ENCODE measurements at regions of chr17 and their contacts with region 1.

Region 1: GRCh38 chr17:7239091-7240027 is at the start of gene PHF23:
- DNase-seq: peak; percentile 91 to 98 (median 97)
- ATAC-seq: peak; percentile 78
- H3K4me3 ChIP-seq: peak within 1 kb of the TSS; percentile 76
- H3K4me3 Mint-ChIP-seq: peak within 1 kb of the TSS; percentile 88 to 98 (median 95)
- H3K27ac ChIP-seq: peak within 1 kb of the TSS; percentile 92
- H3K27ac Mint-ChIP-seq: peak within 1 kb of the TSS; percentile 55 to 100 (median 95)
- H3K4me1 ChIP-seq: peaks cover 32 to 44% of the 10 kb centered on the region in 2 donors
- H3K4me1 Mint-ChIP-seq: peaks cover 38 to 67% (median 60%) of the 10 kb centered on the region in 7 donors
- H3K27me3 ChIP-seq: no peaks in the 10 kb centered on the region
- H3K27me3 Mint-ChIP-seq: peaks cover 0 to 7% (median 0%) of the 10 kb centered on the region in 5 donors
- total RNA-seq, gene PHF23: 12.3 to 58.7 (median 55.2) TPM

Region 2: DNA sequence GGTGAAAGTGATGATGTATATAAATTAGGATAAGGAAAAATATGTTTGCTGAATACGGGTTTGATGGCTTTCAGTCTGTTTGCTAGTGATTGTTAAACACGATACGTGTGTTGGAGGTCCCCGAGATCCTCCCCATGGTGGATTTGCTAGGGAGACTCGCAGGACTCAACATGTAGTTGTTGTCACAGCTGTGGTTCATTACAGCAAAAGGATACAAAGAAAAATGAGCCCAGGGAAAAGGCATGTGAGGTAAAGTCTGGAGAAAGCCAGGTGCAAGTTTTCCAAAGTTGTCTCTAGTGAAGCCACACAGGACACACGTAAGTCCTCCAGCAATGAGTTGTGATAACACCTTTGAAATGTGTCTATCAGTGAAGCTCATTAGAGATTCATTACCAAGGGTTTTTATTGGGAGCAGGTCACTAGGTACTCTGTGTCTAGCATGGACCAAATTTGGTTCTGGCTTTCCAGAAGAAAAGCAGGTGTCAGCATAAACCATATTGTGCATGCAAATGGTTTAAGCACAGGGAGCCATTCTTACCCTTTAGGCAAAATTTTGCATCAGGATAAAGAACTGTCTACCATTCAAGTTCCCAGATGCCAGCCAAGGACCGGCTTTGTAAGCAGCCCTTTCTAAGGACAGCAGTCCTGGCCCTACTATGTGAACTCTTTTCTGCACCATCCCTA is 1384.3 kb before region 1 on chr17:
- CTCF ChIA-PET with region 1: no interaction called
- POLR2A ChIA-PET with region 1: no interaction called
- intact Hi-C with region 1: no loop called
- DNase-seq: no peak
- ATAC-seq: no peak
- H3K4me3 ChIP-seq: no peak overlapping the region
- H3K4me3 Mint-ChIP-seq: no peak overlapping the region
- H3K27ac ChIP-seq: no peak overlapping the region
- H3K27ac Mint-ChIP-seq: no peak overlapping the region
- H3K4me1 ChIP-seq: no peaks in the 10 kb centered on the region
- H3K4me1 Mint-ChIP-seq: no peaks in the 10 kb centered on the region
- H3K27me3 ChIP-seq: no peaks in the 10 kb centered on the region
- H3K27me3 Mint-ChIP-seq: peaks cover 0 to 14% (median 7%) of the 10 kb centered on the region in 5 donors

Region 3: DNA sequence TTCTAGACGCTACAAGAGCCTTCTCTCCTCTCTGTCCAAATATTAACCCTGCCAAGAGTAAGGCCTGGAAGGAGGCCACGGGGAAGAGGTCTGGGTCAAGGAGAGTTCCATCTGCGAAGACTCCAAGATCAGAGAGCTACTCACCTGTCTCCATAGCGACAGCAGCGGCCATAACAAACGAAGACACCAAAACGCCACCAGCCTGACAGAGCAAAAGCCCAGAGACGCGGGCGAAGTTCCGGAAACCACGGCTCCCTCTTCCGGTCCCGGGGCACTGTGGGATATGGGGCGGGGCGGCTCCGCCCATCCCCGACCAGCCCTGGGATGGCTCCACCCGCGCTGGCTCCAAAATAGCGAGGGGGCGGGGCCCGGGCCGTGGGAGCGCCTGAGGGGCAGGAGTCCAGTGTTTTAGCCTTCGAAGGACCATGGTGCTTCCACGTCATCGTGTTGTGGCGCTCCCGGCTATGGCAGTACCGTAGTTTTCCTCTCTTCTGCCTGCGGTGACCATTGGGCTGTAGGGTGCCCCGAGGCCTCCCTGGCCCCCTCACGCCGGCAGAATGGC is 587.9 kb before region 1 on chr17 and contains the starts of genes C17orf100 and MED31:
- CTCF ChIA-PET with region 1: no interaction called
- POLR2A ChIA-PET with region 1: no interaction called
- intact Hi-C with region 1: loop called in 1 of 2 experiments (anchors 5 kb)
- DNase-seq: peak; percentile 89 to 97 (median 93)
- ATAC-seq: peak; percentile 96
- H3K4me3 ChIP-seq: peak within 1 kb of the TSS; percentile 99
- H3K4me3 Mint-ChIP-seq: peak within 1 kb of the TSS; percentile 89 to 100 (median 96)
- H3K27ac ChIP-seq: peak within 1 kb of the TSS; percentile 95
- H3K27ac Mint-ChIP-seq: peak within 1 kb of the TSS; percentile 97 to 100 (median 99)
- H3K4me1 ChIP-seq: peaks cover 21 to 26% of the 10 kb centered on the region in 2 donors
- H3K4me1 Mint-ChIP-seq: peaks cover 37 to 87% (median 78%) of the 10 kb centered on the region in 7 donors
- H3K27me3 ChIP-seq: no peaks in the 10 kb centered on the region
- H3K27me3 Mint-ChIP-seq: peaks cover 0 to 29% (median 0%) of the 10 kb centered on the region in 5 donors
- total RNA-seq, gene C17orf100: 1.9 to 6.1 (median 1.9) TPM
- total RNA-seq, gene MED31: 21.4 to 41.2 (median 28.2) TPM

Region 4: GRCh38 chr17:6924208-6924607 is 315.2 kb before region 1 on chr17:
- CTCF ChIA-PET with region 1: no interaction called
- POLR2A ChIA-PET with region 1: no interaction called
- intact Hi-C with region 1: no loop called
- DNase-seq: peak in 7 of 9 donors; percentile 37 to 58 (median 43)
- ATAC-seq: peak; percentile 65
- H3K4me3 ChIP-seq: no peak overlapping the region
- H3K4me3 Mint-ChIP-seq: peak overlapping the region; percentile 21 to 70 (median 55)
- H3K27ac ChIP-seq: no peak overlapping the region
- H3K27ac Mint-ChIP-seq: peak overlapping the region in 7 of 9 donors; percentile 2 to 56 (median 17)
- H3K4me1 ChIP-seq: peaks cover 3 to 18% of the 10 kb centered on the region in 2 donors
- H3K4me1 Mint-ChIP-seq: peaks cover 5 to 40% (median 34%) of the 10 kb centered on the region in 7 donors
- H3K27me3 ChIP-seq: no peaks in the 10 kb centered on the region
- H3K27me3 Mint-ChIP-seq: peaks cover 0 to 19% (median 0%) of the 10 kb centered on the region in 5 donors

Region 5: DNA sequence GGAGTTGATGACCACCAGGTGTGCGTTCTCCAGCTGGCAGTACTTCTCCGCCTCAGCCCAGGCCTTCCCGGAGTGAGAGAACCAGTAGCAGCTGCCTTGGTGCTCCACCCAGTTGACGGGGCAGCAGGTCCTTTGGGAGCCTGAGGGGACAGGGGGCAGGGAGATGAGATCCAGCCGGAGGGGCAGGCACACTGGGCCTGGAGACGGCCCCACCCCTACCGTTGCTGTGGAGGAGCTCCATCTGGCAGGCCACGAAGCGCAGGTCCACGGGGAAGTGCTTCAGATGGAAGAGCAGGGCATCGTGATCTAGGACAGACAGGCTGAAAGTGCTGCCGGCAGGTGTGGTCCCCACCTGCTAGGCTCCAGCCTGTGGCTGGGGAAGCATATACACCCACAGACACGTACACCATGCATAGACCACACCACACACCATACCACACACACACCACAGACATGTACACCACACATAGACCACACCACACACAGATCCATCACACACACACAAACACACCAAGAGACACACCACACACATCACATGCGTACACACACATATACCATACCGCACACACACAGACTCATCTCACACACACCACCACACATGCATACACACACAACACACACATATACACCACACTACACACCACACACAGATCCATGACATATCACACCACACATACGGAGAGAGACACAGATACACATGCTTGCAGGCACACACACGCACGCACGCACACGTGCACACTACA is 132.2 kb before region 1 on chr17:
- CTCF ChIA-PET with region 1: no interaction called
- POLR2A ChIA-PET with region 1: no interaction called
- intact Hi-C with region 1: no loop called
- DNase-seq: no peak
- ATAC-seq: no peak
- H3K4me3 ChIP-seq: no peak overlapping the region
- H3K4me3 Mint-ChIP-seq: no peak overlapping the region
- H3K27ac ChIP-seq: no peak overlapping the region
- H3K27ac Mint-ChIP-seq: no peak overlapping the region
- H3K4me1 ChIP-seq: peaks cover 0 to 7% of the 10 kb centered on the region in 2 donors
- H3K4me1 Mint-ChIP-seq: peaks cover 10 to 17% (median 12%) of the 10 kb centered on the region in 7 donors
- H3K27me3 ChIP-seq: no peaks in the 10 kb centered on the region
- H3K27me3 Mint-ChIP-seq: peaks cover 0 to 6% (median 0%) of the 10 kb centered on the region in 5 donors

Region 6: DNA sequence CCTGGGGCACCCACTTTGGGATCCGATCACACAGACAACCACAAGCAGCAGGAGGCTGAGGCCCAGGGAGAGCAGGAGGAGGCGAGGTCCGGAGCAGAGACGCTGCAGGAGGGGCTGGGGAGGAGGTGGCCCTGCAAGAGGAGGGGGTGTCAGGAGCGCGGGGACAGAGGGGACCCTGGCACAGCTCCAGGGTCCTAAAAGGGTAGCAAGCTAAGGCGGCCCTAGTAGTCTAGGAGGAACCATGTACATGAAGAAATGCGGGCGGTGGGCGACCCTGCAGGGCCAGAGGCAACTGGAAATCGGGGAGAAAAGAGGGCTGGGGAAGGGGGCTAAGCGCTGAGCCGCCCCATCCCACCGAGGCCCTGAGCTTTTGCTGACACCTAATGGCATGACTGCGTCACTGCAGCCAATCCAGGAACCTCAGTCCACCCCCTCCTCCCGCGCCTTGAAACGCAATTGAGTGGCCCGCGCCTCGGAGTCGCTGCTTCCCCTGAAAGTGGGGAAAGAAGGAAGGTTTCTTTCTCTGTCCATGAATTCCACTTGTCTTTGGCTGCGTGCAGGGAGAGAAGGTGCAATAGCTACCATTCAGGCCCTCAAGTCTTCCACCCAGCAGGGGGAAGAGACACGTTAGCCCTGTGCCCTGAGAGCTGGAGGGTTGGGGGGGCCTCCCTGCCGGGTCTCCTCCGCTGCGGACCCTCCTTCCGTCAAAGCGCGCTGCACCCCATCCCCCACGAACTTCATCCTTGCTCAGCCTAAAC is 62.0 kb before region 1 on chr17:
- CTCF ChIA-PET with region 1: no interaction called
- POLR2A ChIA-PET with region 1: no interaction called
- intact Hi-C with region 1: no loop called
- DNase-seq: peak; percentile 48 to 76 (median 62)
- ATAC-seq: peak; percentile 88
- H3K4me3 ChIP-seq: peak overlapping the region; percentile 50
- H3K4me3 Mint-ChIP-seq: peak overlapping the region in 8 of 10 donors; percentile 68 to 83 (median 81)
- H3K27ac ChIP-seq: no peak overlapping the region
- H3K27ac Mint-ChIP-seq: peak overlapping the region in 5 of 9 donors; percentile 18 to 66 (median 51)
- H3K4me1 ChIP-seq: peaks cover 12 to 23% of the 10 kb centered on the region in 2 donors
- H3K4me1 Mint-ChIP-seq: peaks cover 4 to 13% (median 9%) of the 10 kb centered on the region in 7 donors
- H3K27me3 ChIP-seq: no peaks in the 10 kb centered on the region
- H3K27me3 Mint-ChIP-seq: peaks cover 0 to 17% (median 8%) of the 10 kb centered on the region in 5 donors

Region 7: GRCh38 chr17:7214300-7215135 is 24.8 kb before region 1 on chr17:
- CTCF ChIA-PET with region 1: interaction called, 9 read pairs
- POLR2A ChIA-PET with region 1: interaction called, 265 read pairs
- intact Hi-C with region 1: loop called (anchors 1 kb)
- DNase-seq: peak; percentile 96 to 99 (median 97)
- ATAC-seq: peak; percentile 90
- H3K4me3 ChIP-seq: peak overlapping the region; percentile 61
- H3K4me3 Mint-ChIP-seq: peak overlapping the region; percentile 76 to 97 (median 94)
- H3K27ac ChIP-seq: peak overlapping the region; percentile 97
- H3K27ac Mint-ChIP-seq: peak overlapping the region; percentile 90 to 100 (median 99)
- H3K4me1 ChIP-seq: peaks cover 25 to 49% of the 10 kb centered on the region in 2 donors
- H3K4me1 Mint-ChIP-seq: peaks cover 36 to 69% (median 65%) of the 10 kb centered on the region in 7 donors
- H3K27me3 ChIP-seq: no peaks in the 10 kb centered on the region
- H3K27me3 Mint-ChIP-seq: peaks cover 0 to 16% (median 0%) of the 10 kb centered on the region in 5 donors

Region 8: GRCh38 chr17:7261172-7261927 is 22.0 kb after region 1 on chr17:
- CTCF ChIA-PET with region 1: no interaction called
- POLR2A ChIA-PET with region 1: interaction called, 5 read pairs
- intact Hi-C with region 1: loop called in 1 of 2 experiments (anchors 1 kb)
- DNase-seq: peak in 1 of 9 donors; percentile 34
- ATAC-seq: peak; percentile 63
- H3K4me3 ChIP-seq: peak overlapping the region; percentile 59
- H3K4me3 Mint-ChIP-seq: peak overlapping the region; percentile 65 to 87 (median 76)
- H3K27ac ChIP-seq: peak overlapping the region; percentile 68
- H3K27ac Mint-ChIP-seq: peak overlapping the region in 8 of 9 donors; percentile 29 to 68 (median 56)
- H3K4me1 ChIP-seq: peaks cover 13 to 19% of the 10 kb centered on the region in 2 donors
- H3K4me1 Mint-ChIP-seq: peaks cover 18 to 35% (median 28%) of the 10 kb centered on the region in 7 donors
- H3K27me3 ChIP-seq: no peaks in the 10 kb centered on the region
- H3K27me3 Mint-ChIP-seq: peaks cover 0 to 32% (median 14%) of the 10 kb centered on the region in 5 donors

Region 9: DNA sequence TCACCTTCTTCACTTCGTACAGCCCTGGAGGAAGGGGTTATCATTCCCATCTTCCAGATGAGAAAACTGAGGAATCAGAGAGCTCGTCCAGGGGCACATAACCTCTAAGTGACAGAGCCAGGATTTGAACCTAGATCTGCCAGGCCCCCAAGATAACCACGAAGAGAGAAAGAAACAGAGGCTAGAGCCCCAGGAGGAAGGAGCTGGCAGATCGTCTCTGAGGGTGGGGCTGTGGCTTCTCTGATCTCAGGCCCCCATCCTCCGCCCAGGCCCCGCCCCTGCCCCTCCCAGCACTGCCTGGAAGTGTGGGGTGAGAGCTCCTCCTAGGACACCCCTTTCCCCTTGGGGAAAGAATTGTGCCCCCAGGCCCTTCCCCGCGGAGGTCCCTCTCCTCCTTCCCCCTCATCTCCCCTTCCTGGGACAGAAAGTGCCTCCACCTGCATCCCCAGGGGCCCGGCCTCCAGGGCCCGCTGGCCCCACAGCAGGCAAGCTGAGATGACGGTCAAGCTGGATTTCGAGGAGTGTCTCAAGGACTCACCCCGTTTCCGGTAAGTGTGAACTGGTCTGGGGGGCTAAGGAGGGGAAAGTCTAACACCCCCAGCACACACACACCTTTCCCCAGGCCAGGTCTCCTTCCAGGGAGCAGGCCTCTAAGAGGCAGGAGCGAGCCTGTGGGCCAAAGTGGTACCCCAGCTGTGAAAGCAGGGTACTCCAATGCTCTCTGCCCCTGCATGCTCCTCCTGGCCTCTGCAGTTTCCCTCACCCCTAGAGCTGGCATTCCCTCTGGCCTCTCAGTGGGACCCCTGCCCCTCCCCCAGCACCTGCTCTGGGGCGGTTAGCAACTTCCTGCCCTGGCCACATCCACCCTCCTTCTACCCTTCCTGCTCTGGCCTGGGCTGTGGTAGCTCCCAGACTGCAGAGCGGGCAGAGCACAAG is 97.1 kb after region 1 on chr17 and contains the start of gene ACAP1:
- CTCF ChIA-PET with region 1: no interaction called
- POLR2A ChIA-PET with region 1: interaction called, 13 read pairs
- intact Hi-C with region 1: no loop called
- DNase-seq: peak; percentile 56 to 85 (median 82)
- ATAC-seq: peak; percentile 99
- H3K4me3 ChIP-seq: peak within 1 kb of the TSS; percentile 99
- H3K4me3 Mint-ChIP-seq: peak within 1 kb of the TSS; percentile 89 to 99 (median 94)
- H3K27ac ChIP-seq: peak within 1 kb of the TSS; percentile 81
- H3K27ac Mint-ChIP-seq: peak within 1 kb of the TSS; percentile 89 to 100 (median 95)
- H3K4me1 ChIP-seq: peaks cover 31 to 44% of the 10 kb centered on the region in 2 donors
- H3K4me1 Mint-ChIP-seq: peaks cover 49 to 76% (median 60%) of the 10 kb centered on the region in 7 donors
- H3K27me3 ChIP-seq: no peaks in the 10 kb centered on the region
- H3K27me3 Mint-ChIP-seq: no peaks in the 10 kb centered on the region
- total RNA-seq, gene ACAP1: 482 to 708 (median 599) TPM

Region 10: DNA sequence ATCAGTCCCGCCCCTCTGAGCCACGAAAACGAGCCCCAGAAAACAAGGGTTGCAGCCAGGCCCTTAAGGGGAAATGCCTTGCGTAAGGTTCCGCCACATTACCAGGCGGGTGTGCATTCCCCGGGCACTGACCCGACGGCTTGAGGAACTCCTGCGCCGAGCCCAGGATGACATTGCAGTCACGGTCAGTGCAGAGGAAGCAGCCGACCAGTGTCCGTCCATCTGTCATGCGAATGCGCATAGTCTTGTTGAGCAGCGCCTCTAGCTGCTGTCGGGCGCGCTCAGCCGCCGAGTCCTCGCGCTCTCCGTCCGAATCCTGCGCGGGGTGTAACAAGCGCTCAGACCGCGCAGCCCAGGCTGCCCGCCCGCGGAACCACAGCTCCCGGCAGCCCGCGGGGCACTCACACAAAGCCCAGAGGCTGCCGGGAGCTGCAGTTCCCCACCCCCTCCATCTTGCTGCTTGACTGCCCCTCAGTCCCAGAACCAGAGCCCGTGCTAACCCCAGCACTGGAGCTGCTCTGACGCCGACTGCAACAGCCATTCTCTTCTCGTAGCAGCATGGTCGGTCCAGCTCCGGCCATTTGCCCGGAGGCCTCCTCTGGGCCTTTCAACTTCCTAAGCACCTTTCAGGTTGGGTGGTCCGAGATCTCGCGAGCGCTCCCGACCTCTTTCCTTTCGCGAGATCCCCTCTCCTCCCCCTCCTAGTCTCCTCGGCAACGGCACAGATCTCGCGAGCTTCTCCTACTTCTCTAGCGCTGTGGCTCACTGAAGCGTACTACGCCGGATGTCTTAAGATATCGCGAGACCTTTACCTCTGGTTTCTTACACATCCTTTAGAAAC is 617.7 kb after region 1 on chr17 and contains the start of gene NAA38:
- CTCF ChIA-PET with region 1: no interaction called
- POLR2A ChIA-PET with region 1: no interaction called
- intact Hi-C with region 1: loop called in 1 of 2 experiments (anchors 1 kb)
- DNase-seq: peak; percentile 81 to 99 (median 97)
- ATAC-seq: peak; percentile 87
- H3K4me3 ChIP-seq: peak within 1 kb of the TSS; percentile 70
- H3K4me3 Mint-ChIP-seq: no peak within 1 kb of the TSS
- H3K27ac ChIP-seq: peak within 1 kb of the TSS; percentile 83
- H3K27ac Mint-ChIP-seq: no peak within 1 kb of the TSS
- H3K4me1 ChIP-seq: peaks cover 25 to 26% of the 10 kb centered on the region in 2 donors
- H3K4me1 Mint-ChIP-seq: peaks cover 0 to 16% (median 5%) of the 10 kb centered on the region in 7 donors
- H3K27me3 ChIP-seq: no peaks in the 10 kb centered on the region
- H3K27me3 Mint-ChIP-seq: no peaks in the 10 kb centered on the region
- total RNA-seq, gene NAA38: 22.1 to 63.8 (median 24.9) TPM

Measured in naive thymus-derived CD4-positive, alpha-beta T cell (primary cell).